Tibial artery (tissue), 4 donors: ENCODE measurements at regions of chr10 and their contacts with region 1.

Region 1: GRCh38 chr10:46325023-46325422 is 38.2 kb downstream of the ANTXRL start:
- DNase-seq: no peak
- H3K4me3 ChIP-seq: no peak overlapping the region
- H3K27ac ChIP-seq: peak overlapping the region in 1 of 2 donors; percentile 33
- H3K4me1 ChIP-seq: peaks cover 0 to 15% (median 7%) of the 10 kb centered on the region in 4 donors
- H3K27me3 ChIP-seq: no peaks in the 10 kb centered on the region
- CTCF ChIP-seq: no peak

Region 2: GRCh38 chr10:45339894-45340293 is 985.1 kb before region 1 on chr10:
- intact Hi-C with region 1: no loop called
- DNase-seq: no peak
- H3K4me3 ChIP-seq: no peak overlapping the region
- H3K27ac ChIP-seq: no peak overlapping the region
- H3K4me1 ChIP-seq: no peaks in the 10 kb centered on the region
- H3K27me3 ChIP-seq: no peaks in the 10 kb centered on the region
- CTCF ChIP-seq: no peak

Region 3: DNA sequence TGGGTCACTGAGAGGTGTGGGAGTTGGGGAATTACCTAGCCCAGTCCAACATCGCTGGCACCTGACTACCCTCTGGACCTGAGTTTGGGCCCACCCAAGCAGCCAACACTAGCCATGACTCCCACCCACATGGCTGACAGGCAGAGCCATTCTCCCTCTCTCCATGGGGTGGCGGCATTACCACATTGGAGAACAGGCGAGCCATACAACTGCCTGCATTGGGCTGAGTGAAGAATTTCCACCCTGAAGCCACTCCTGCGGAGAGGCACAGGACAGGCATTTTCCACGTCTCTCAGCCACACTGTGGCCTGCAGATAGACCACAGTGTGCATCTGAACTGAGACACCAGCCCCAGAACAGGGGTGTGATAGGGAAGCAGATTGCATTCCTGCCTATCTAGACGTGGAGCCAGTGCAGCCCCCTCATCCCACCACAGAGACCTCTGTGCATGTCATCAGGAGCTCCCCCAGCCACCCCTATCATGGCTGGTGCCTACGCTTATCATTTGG is 96.4 kb before region 1 on chr10:
- intact Hi-C with region 1: loop called (anchors 10 kb)
- DNase-seq: peak; percentile 76 to 78
- H3K4me3 ChIP-seq: no peak overlapping the region
- H3K27ac ChIP-seq: no peak overlapping the region
- H3K4me1 ChIP-seq: no peaks in the 10 kb centered on the region
- H3K27me3 ChIP-seq: no peaks in the 10 kb centered on the region
- CTCF ChIP-seq: peak; percentile 88 to 94